Transverse colon (tissue), 4 donors: ENCODE measurements at regions of chr16 and their contacts with region 1.

Region 1: GRCh38 chr16:268141-269053 is 7.3 kb downstream of the RGS11 start:
- DNase-seq: peak; percentile 77
- H3K4me3 ChIP-seq: no peak overlapping the region
- H3K27ac ChIP-seq: peak overlapping the region in 3 of 4 donors; percentile 50 to 66 (median 59)
- H3K4me1 ChIP-seq: peaks cover 0 to 13% (median 6%) of the 10 kb centered on the region in 4 donors
- H3K27me3 ChIP-seq: no peaks in the 10 kb centered on the region
- CTCF ChIP-seq: no peak
- EP300 ChIP-seq: no peak
- POLR2A ChIP-seq: peak; percentile 55

Region 2: DNA sequence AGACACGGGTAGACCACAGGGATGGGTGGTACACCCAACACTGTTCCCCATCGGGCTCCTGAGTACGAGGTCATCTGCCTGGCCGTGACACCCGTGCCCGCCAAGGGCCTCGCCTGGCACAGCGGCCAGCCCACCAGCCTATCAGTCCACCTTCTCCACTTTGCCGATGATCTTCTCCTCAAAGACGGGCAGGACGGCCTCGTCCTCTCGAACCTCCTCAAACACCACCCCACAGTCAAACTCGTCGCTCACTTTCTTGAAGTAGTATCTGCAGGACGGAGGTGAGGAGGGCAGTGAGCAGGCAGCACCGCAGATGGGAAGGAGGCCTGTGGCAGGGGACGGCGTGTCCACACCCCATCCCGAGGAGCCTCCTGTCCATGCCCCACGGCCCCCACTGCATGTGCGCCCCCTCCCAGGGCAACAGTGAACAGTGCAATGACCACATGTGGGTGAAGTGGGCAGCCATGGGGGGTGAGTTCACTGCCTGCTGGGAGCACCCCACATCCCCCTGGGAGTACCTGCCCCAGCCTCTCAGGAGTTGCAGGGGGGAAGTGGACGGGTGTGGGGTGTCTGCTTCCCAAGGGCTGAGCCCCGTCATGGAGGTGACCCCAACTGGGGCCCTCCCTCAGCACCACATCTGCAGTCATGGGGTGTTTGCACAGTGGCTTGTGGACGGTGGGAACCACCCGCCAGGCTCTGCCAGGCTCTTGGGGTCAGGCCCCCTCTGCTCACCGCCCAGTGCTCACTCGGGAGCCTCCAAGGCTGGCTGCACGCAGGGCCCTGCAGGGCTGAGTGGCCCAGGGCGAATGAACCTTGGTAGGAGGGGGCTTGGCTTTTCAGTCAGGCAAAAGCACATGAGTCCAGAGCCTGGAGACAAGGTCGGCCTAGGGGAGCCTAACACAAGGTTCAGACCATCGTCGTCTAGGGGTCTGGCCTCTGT is 19.9 kb after region 1 on chr16:
- in situ Hi-C with region 1: no loop called
- intact Hi-C with region 1: loop called (anchors 1 kb)
- DNase-seq: no peak
- H3K4me3 ChIP-seq: no peak overlapping the region
- H3K27ac ChIP-seq: no peak overlapping the region
- H3K4me1 ChIP-seq: no peaks in the 10 kb centered on the region
- H3K27me3 ChIP-seq: peaks cover 2% of the 10 kb centered on the region
- CTCF ChIP-seq: no peak
- EP300 ChIP-seq: no peak
- POLR2A ChIP-seq: no peak